ENCODE measurements at regions of chr11 and their contacts with region 1.

Region 1: DNA sequence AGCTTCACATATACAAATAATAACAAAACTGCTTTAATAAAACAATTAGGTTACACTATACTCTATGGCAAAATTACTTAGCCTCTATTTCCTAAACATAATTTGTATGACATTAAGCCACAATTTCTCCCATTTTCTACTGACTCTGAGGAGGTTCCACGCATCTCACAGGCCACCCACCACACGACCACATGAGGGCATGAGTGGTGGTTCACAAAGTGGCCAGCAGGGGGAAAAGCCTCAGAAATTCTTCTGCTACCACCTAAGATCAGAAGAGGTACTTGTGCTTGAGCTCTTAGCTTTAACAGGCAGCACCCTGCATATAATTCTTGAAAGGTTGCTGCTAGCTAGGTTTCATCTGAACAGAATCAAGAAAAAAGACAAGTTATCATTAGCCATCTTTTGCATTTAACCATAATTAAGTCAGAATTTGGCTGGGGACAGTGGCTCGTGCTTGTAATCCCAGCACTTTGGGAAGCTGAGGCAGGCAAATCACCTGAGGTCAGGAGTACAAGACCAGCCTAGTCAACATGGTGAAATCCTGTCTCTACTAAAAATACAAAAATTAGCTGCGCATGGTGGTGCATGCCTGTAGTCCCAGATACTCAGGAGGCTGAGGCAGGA is 7.7 kb downstream of the LPXN start:
- DNase-seq: peak; percentile 72 to 79 (median 76)
- H3K4me3 ChIP-seq: no peak overlapping the region
- H3K4me3 Mint-ChIP-seq: peak overlapping the region; percentile 7 to 84 (median 66)
- H3K27ac ChIP-seq: no peak overlapping the region
- H3K27ac Mint-ChIP-seq: peak overlapping the region; percentile 64 to 93 (median 81)
- H3K4me1 ChIP-seq: peaks cover 76% of the 10 kb centered on the region
- H3K4me1 Mint-ChIP-seq: peaks cover 41 to 63% (median 52%) of the 10 kb centered on the region in 4 donors
- H3K27me3 ChIP-seq: no peaks in the 10 kb centered on the region
- H3K27me3 Mint-ChIP-seq: no peaks in the 10 kb centered on the region

Region 2: GRCh38 chr11:58530236-58530635 is 37.8 kb before region 1 on chr11:
- CTCF ChIA-PET with region 1: interaction called, 19 read pairs
- POLR2A ChIA-PET with region 1: interaction called, 8 read pairs
- intact Hi-C with region 1: no loop called
- DNase-seq: peak; percentile 34 to 56 (median 40)
- H3K4me3 ChIP-seq: no peak overlapping the region
- H3K4me3 Mint-ChIP-seq: peak overlapping the region in 7 of 8 donors; percentile 5 to 56 (median 33)
- H3K27ac ChIP-seq: peak overlapping the region; percentile 12
- H3K27ac Mint-ChIP-seq: peak overlapping the region; percentile 53 to 95 (median 80)
- H3K4me1 ChIP-seq: peaks cover 31% of the 10 kb centered on the region
- H3K4me1 Mint-ChIP-seq: peaks cover 31 to 63% (median 47%) of the 10 kb centered on the region in 4 donors
- H3K27me3 ChIP-seq: no peaks in the 10 kb centered on the region
- H3K27me3 Mint-ChIP-seq: no peaks in the 10 kb centered on the region

Region 3: GRCh38 chr11:58586998-58587397 is 19.0 kb after region 1 on chr11:
- CTCF ChIA-PET with region 1: interaction called, 187 read pairs
- POLR2A ChIA-PET with region 1: interaction called, 8 read pairs
- intact Hi-C with region 1: no loop called
- DNase-seq: no peak
- H3K4me3 ChIP-seq: no peak overlapping the region
- H3K4me3 Mint-ChIP-seq: no peak overlapping the region
- H3K27ac ChIP-seq: no peak overlapping the region
- H3K27ac Mint-ChIP-seq: peak overlapping the region in 1 of 7 donors; percentile 1
- H3K4me1 ChIP-seq: peaks cover 34% of the 10 kb centered on the region
- H3K4me1 Mint-ChIP-seq: peaks cover 36 to 46% (median 38%) of the 10 kb centered on the region in 4 donors
- H3K27me3 ChIP-seq: no peaks in the 10 kb centered on the region
- H3K27me3 Mint-ChIP-seq: no peaks in the 10 kb centered on the region

Region 4: GRCh38 chr11:58616594-58616993 is 48.6 kb after region 1 on chr11:
- CTCF ChIA-PET with region 1: interaction called, 9 read pairs
- POLR2A ChIA-PET with region 1: no interaction called
- intact Hi-C with region 1: loop called (anchors 10 kb)
- DNase-seq: no peak
- H3K4me3 ChIP-seq: no peak overlapping the region
- H3K4me3 Mint-ChIP-seq: no peak overlapping the region
- H3K27ac ChIP-seq: no peak overlapping the region
- H3K27ac Mint-ChIP-seq: peak overlapping the region in 1 of 7 donors; percentile 9
- H3K4me1 ChIP-seq: no peaks in the 10 kb centered on the region
- H3K4me1 Mint-ChIP-seq: peaks cover 0 to 3% (median 2%) of the 10 kb centered on the region in 4 donors
- H3K27me3 ChIP-seq: no peaks in the 10 kb centered on the region
- H3K27me3 Mint-ChIP-seq: no peaks in the 10 kb centered on the region

Region 5: DNA sequence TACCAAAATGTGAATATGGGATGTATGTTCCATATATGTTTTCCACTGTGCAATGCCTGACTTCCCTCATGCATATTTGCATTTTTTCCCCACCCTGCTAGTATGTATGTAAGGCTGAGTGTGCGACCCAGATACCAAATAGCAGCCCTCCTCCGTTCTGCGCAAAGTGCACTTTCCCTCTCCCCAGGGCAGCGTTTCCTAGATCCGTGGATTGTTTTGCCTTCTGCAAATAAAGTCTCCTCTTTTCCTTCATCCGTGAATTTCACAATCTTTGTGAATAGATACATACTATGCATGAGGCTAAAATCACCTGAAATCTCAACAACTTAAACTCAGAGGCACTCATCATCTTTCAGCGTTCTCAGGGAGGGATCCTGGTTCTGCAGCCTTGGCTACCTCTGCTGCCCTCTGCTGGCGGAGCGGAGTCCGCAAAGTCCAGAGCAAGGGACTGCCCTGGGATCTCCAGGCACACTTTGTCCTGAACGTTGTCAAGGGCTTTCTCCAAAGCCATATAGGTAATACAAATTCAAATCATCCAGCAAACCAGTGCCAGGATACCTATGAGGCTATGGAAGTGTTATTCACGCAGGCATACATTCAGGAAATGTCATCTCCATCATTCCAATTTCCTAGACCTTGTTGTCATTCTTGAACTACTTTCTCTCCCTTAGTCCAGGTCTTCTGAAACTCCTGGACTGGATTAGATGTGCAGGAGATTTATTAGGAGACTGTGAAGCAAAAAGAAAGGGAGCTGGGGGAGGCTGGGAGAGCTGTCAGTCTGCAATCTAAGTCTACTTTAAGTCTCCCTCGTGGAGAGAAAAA is 107.5 kb after region 1 on chr11:
- CTCF ChIA-PET with region 1: interaction called, 6 read pairs
- POLR2A ChIA-PET with region 1: no interaction called
- intact Hi-C with region 1: loop called (anchors 1 kb)
- DNase-seq: peak; percentile 46 to 64 (median 58)
- H3K4me3 ChIP-seq: no peak overlapping the region
- H3K4me3 Mint-ChIP-seq: no peak overlapping the region
- H3K27ac ChIP-seq: no peak overlapping the region
- H3K27ac Mint-ChIP-seq: no peak overlapping the region
- H3K4me1 ChIP-seq: no peaks in the 10 kb centered on the region
- H3K4me1 Mint-ChIP-seq: no peaks in the 10 kb centered on the region
- H3K27me3 ChIP-seq: peaks cover 5% of the 10 kb centered on the region
- H3K27me3 Mint-ChIP-seq: peaks cover 0 to 4% of the 10 kb centered on the region in 2 donors